ENCODE measurements at regions of chr1 and their contacts with region 1.

Region 1: DNA sequence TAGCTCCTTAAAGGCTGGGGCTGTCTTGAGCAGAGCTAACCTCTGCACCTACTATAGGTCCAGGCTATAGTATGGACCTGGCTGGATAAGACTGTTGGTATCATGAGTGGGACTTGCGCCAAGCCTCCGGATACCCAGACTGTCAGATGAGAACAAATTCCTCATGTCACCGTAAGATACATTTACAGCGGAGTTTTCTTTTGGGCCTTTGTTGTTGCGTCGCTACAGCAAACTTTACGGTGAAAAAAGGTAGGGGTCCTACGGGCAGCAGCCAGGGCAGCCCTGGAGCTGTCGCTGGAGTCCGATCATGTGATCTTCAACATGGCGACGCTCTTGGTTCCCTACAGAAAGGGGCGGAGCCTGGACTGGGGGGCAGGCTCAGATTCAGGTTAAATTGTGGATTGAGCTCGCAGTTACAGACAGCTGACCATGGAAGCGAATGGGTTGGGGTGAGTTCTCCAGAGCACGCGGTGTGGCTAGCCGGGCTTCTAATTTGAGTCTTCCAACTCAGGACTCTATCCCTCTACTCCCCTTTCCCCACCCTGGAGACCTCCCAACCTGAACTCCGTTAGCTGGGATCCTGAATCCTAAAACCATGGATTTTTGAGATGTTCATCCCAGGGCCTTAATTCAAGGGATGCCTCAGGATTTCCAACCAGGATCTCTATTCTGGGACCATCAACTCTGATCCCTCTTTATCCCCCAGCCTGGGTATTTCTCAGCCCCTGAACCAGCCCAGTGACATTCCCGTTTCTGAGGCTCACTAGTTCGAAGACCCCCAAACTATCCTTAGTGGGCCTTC is at the start of gene UROD:
- DNase-seq: peak; percentile 86
- H3K4me3 Mint-ChIP-seq: peak within 1 kb of the TSS; percentile 84
- H3K27ac Mint-ChIP-seq: peak within 1 kb of the TSS; percentile 90
- H3K4me1 Mint-ChIP-seq: peaks cover 58% of the 10 kb centered on the region
- H3K27me3 Mint-ChIP-seq: no peaks in the 10 kb centered on the region
- total RNA-seq, gene UROD: 79.9 and 81.9 TPM in 2 replicates

Region 2: GRCh38 chr1:44029906-44030604 is 982.0 kb before region 1 on chr1:
- intact Hi-C with region 1: loop called (anchors 5 kb)
- DNase-seq: peak; percentile 86
- H3K4me3 Mint-ChIP-seq: peak overlapping the region; percentile 90
- H3K27ac Mint-ChIP-seq: peak overlapping the region; percentile 92
- H3K4me1 Mint-ChIP-seq: peaks cover 30% of the 10 kb centered on the region
- H3K27me3 Mint-ChIP-seq: peaks cover 2% of the 10 kb centered on the region

Region 3: DNA sequence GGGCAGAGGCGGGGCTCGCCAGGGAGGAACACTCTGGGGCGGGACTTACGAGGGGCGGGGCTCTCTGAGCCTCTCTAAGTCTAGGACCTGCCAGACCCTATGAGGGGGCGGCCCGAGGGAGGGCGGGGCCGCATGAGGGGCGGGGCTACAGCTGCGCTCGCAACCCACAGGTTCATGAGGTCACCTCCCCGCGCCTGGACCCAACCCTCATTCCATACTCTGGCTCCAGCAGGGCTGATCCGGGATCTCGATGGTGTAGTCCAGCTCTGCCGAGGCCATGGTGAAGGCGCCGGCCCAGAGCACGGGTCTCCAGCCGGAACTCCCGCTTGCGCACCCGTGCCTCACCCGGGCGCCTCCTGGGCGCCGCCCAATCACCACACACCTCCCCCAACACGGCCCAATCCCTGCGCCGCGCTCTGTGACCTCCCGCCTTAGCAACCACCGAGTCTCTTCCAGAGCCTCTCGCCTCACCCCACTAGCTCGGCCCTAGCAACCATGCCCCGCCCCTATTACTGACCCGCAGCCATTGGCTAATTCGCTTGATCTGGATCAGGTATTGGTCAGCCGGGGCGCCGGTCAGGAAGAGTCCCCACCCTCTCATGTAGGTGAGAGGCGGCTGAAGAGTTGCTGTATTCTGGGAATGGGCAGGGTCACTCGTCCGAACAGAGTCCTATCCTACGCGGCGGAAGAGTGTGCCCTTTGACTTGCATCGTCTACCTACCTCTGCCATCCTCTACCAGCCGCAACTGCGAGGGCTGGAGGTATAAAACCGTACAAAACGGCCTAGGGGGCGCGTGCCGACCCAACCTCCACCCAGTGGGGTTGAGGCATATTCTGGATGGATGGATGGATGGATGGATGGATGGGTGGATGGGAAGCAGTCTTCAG is 337.7 kb before region 1 on chr1 and contains the starts of genes ARMH1 and TMEM53:
- intact Hi-C with region 1: loop called (anchors 1 kb)
- DNase-seq: peak; percentile 98
- H3K4me3 Mint-ChIP-seq: peak within 1 kb of the TSS; percentile 80
- H3K27ac Mint-ChIP-seq: peak within 1 kb of the TSS; percentile 79
- H3K4me1 Mint-ChIP-seq: peaks cover 30% of the 10 kb centered on the region
- H3K27me3 Mint-ChIP-seq: no peaks in the 10 kb centered on the region
- total RNA-seq, gene ARMH1: 95.3 and 99.8 TPM in 2 replicates
- total RNA-seq, gene TMEM53: 4.3 and 6.6 TPM in 2 replicates

Region 4: DNA sequence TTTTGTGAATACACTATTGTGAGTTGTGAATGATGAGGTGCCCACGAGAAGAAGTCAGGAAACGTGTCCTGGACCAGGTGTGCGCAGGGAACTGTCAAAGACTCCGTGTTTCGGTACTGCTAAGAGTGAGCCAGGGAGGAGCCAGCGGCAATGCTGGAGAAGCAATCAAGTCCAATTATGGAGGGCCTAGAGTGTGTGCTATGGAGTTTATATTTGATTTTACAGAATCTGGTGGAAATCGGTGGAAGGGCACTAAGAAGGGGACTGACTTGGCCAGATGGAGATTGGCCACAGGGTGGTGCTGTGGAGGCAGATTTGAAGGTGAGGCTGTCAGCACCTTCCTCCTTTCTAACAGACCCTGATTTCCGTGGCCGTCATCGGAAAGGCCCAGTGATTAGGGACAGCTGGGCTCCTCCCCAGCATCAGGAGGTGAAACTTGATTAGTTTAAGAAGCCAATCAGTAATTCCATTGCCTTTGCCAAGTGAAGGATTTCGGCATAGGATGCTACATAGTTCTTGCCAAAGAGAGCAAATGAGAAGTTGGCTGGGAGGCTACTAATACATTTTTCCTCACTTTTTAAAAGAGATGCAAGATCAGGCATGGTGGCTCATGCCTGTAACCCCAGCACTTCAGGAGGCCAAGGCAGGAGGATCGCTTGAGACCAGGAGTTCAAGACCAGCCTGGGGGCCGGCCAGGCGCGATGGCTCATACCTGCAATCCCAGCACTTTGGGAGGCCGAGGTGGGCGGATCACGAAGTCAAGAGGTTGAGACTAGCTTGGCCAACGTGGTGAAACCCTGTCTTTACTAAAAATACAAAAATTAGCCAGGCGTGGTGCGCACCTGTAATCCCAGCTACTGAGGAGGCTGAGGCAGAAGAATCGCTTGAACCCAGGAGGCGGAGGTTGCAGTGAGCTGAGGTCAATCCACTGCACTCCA is 176.0 kb before region 1 on chr1:
- intact Hi-C with region 1: loop called (anchors 1 kb)
- DNase-seq: peak; percentile 71
- H3K4me3 Mint-ChIP-seq: peak overlapping the region; percentile 26
- H3K27ac Mint-ChIP-seq: no peak overlapping the region
- H3K4me1 Mint-ChIP-seq: peaks cover 9% of the 10 kb centered on the region
- H3K27me3 Mint-ChIP-seq: peaks cover 4% of the 10 kb centered on the region

Region 5: GRCh38 chr1:45205910-45206721 is 194.1 kb after region 1 on chr1 and contains the start of gene ZSWIM5:
- intact Hi-C with region 1: loop called (anchors 2 kb)
- DNase-seq: peak; percentile 43
- H3K4me3 Mint-ChIP-seq: peak within 1 kb of the TSS; percentile 88
- H3K27ac Mint-ChIP-seq: peak within 1 kb of the TSS; percentile 86
- H3K4me1 Mint-ChIP-seq: peaks cover 17% of the 10 kb centered on the region
- H3K27me3 Mint-ChIP-seq: peaks cover 43% of the 10 kb centered on the region
- total RNA-seq, gene ZSWIM5: 0.10 and 0.15 TPM in 2 replicates

Region 6: DNA sequence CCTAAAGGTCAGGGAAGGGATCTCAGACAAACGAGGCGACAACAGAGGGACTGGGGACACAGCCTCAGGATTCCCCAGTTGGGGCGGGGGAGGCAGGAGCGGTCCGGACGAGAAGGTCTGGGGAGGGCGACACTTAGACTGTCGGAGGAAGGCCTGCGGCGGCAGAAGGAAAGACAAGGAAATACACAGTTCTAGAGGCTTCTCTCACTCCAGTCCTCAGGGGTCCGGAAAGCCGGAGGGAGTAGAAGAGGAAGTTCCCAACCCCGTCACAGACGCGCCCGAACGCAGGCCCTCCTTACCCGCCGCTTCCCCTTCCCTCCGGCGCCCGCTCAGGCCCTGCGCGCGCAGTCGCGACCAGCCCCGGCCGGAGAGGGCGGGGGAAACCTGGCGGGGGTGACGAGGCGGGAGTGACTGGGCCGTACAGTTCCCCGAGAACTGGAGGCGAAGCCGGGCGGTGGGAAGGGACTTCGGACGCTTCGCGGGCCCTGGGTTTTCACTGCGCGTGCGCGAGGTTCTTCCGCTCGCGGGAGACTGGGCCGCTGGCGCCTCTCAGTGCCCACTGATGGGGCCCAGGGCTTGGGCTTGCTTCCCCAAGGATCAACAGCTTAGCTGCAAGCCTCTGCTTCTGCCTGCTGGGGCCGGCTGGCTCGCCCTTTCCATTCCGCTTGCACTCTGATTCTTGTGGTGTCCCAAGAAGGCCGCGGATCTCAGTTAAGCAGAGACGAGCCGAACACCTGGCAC is 738.4 kb after region 1 on chr1 and contains the start of gene IPP:
- intact Hi-C with region 1: loop called (anchors 5 kb)
- DNase-seq: peak; percentile 96
- H3K4me3 Mint-ChIP-seq: peak within 1 kb of the TSS; percentile 98
- H3K27ac Mint-ChIP-seq: peak within 1 kb of the TSS; percentile 96
- H3K4me1 Mint-ChIP-seq: peaks cover 10% of the 10 kb centered on the region
- H3K27me3 Mint-ChIP-seq: no peaks in the 10 kb centered on the region
- total RNA-seq, gene IPP: 12.3 and 13.9 TPM in 2 replicates